Activated CD4-positive, alpha-beta T cell treated with anti-CD3 and anti-CD28 coated beads, Interleukin-2, amount 10 ng/mL, durations not matched to agents 24 days and 14 days (primary cell): ENCODE measurements at regions of chr18 and their contacts with region 1.

Region 1: DNA sequence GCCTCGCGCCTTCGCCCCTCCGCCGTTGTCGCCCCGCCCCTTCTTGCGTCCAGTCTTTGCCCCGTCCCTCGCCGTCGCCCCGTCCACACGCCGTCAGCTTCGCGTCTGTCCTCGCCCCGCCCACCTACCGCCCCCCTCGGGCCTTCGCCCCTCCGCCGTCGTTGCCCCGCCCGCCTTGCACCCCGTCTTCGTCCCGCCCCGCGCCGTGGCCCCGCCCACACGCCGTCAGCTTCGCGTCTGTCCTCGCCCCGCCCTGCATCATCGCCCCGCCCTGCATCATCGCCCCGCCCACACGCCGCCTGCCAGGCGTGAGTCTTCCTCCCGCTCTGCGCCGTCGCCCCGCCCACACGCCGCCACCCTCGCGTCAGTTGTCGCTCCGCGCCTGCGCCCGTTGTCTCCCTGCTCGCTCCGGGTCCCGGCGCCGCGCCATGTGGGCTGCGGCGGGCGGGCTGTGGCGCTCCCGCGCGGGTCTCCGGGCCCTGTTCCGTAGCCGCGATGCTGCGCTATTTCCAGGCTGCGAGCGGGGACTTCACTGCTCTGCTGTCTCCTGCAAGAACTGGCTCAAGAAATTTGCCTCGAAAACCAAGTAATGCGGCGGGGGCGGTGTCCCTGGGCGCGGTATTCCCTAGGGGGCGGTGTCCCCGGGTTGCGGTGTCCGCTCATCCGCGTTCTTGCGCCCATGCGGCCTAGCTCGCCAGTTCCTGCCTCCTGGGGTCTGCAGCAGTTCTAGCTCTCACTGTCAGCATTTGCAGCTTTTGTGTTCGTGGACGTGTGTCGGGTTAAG is at the start of gene RBFA:
- DNase-seq: peak; percentile 99
- H3K4me3 Mint-ChIP-seq: peak within 1 kb of the TSS; percentile 94
- H3K27ac Mint-ChIP-seq: peak within 1 kb of the TSS; percentile 97
- H3K4me1 Mint-ChIP-seq: peaks cover 30% of the 10 kb centered on the region
- H3K27me3 Mint-ChIP-seq: peaks cover 4% of the 10 kb centered on the region
- total RNA-seq, gene RBFA: 46.0 and 49.9 TPM in 2 replicates

Region 2: DNA sequence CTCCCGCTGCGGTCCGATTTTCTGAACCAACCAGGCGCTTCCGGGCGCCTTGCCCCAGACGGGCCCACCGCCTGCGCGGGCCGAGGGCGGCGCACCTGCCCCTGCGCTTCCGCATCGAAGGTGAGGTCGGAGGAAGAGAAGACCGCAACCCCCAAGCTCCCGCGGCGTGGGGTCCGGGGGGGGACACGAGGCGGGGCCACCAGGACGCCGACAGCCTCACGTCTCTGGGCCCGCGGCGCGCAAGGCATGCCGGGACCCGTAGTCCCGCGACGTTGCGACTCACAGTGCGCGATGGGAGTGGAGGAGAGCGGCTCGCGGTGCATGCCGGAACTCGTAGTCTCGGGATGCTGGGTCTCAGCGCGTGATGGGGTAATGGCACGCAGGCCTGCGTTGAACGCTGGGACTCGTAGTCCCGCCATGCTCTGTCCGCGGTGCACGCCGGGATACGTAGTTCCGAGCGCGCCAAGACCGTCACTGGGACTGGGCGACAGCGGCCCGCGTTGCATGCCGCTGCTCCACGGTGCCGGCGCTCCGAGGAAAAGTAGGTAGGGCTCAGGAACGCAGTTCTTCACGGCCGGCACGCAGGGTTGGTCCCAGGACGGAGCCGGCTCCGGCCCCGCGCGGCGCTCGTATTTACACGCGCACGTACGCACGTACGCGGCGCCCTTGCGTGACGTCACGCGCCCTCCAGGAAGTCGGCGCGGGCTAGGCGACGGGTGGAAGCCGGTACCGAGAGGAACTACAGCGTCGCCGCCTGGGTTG is 355.0 kb before region 1 on chr18 and contains the start of gene CTDP1:
- intact Hi-C with region 1: loop called (anchors 1 kb)
- DNase-seq: peak; percentile 99
- H3K4me3 Mint-ChIP-seq: peak within 1 kb of the TSS; percentile 93
- H3K27ac Mint-ChIP-seq: peak within 1 kb of the TSS; percentile 99
- H3K4me1 Mint-ChIP-seq: peaks cover 56% of the 10 kb centered on the region
- H3K27me3 Mint-ChIP-seq: peaks cover 4% of the 10 kb centered on the region
- total RNA-seq, gene CTDP1: 41.2 and 45.5 TPM in 2 replicates

Region 3: GRCh38 chr18:79964330-79965118 is 69.7 kb before region 1 on chr18 and contains the start of gene HSBP1L1:
- intact Hi-C with region 1: loop called (anchors 2 kb)
- DNase-seq: peak; percentile 94
- H3K4me3 Mint-ChIP-seq: peak within 1 kb of the TSS; percentile 82
- H3K27ac Mint-ChIP-seq: peak within 1 kb of the TSS; percentile 84
- H3K4me1 Mint-ChIP-seq: peaks cover 31% of the 10 kb centered on the region
- H3K27me3 Mint-ChIP-seq: peaks cover 3% of the 10 kb centered on the region
- total RNA-seq, gene HSBP1L1: 6.8 and 8.1 TPM in 2 replicates

Region 4: GRCh38 chr18:79988451-79989194 is 45.6 kb before region 1 on chr18 and contains the start of gene TXNL4A:
- intact Hi-C with region 1: loop called (anchors 1 kb)
- DNase-seq: peak; percentile 96
- H3K4me3 Mint-ChIP-seq: peak within 1 kb of the TSS; percentile 88
- H3K27ac Mint-ChIP-seq: peak within 1 kb of the TSS; percentile 94
- H3K4me1 Mint-ChIP-seq: peaks cover 32% of the 10 kb centered on the region
- H3K27me3 Mint-ChIP-seq: no peaks in the 10 kb centered on the region
- total RNA-seq, gene TXNL4A: 198 and 210 TPM in 2 replicates

Region 5: GRCh38 chr18:80108728-80109675 is 74.7 kb after region 1 on chr18 and contains the start of gene ADNP2:
- intact Hi-C with region 1: loop called (anchors 1 kb)
- DNase-seq: peak; percentile 96
- H3K4me3 Mint-ChIP-seq: peak within 1 kb of the TSS; percentile 85
- H3K27ac Mint-ChIP-seq: peak within 1 kb of the TSS; percentile 88
- H3K4me1 Mint-ChIP-seq: peaks cover 24% of the 10 kb centered on the region
- H3K27me3 Mint-ChIP-seq: no peaks in the 10 kb centered on the region
- total RNA-seq, gene ADNP2: 29.3 and 29.8 TPM in 2 replicates

Region 6: DNA sequence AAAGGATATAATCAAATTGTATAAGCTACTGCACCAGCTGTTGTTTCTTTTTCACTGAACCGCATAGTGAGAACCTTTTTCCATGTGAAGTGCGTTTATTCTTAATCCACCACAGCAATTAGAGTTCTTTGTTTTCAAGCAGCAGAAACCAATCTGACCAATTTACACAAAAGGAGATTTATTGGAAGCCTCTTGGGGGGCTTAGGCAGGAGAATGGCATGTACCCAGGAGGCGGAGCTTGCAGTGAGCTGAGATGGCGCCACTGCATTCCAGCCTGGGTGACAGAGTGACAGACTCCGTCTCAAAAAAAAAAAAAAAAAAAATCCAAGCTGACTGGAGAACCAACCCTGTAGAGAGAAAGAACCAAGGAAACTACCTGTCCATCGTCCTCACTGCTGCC is 84.9 kb after region 1 on chr18:
- intact Hi-C with region 1: no loop called
- DNase-seq: no peak
- H3K4me3 Mint-ChIP-seq: no peak overlapping the region
- H3K27ac Mint-ChIP-seq: no peak overlapping the region
- H3K4me1 Mint-ChIP-seq: peaks cover 13% of the 10 kb centered on the region
- H3K27me3 Mint-ChIP-seq: no peaks in the 10 kb centered on the region

Region 7: GRCh38 chr18:80147418-80148325 is 113.4 kb after region 1 on chr18:
- intact Hi-C with region 1: loop called (anchors 1 kb)
- DNase-seq: peak; percentile 94
- H3K4me3 Mint-ChIP-seq: peak overlapping the region; percentile 88
- H3K27ac Mint-ChIP-seq: peak overlapping the region; percentile 82
- H3K4me1 Mint-ChIP-seq: peaks cover 5% of the 10 kb centered on the region
- H3K27me3 Mint-ChIP-seq: no peaks in the 10 kb centered on the region

Region 8: DNA sequence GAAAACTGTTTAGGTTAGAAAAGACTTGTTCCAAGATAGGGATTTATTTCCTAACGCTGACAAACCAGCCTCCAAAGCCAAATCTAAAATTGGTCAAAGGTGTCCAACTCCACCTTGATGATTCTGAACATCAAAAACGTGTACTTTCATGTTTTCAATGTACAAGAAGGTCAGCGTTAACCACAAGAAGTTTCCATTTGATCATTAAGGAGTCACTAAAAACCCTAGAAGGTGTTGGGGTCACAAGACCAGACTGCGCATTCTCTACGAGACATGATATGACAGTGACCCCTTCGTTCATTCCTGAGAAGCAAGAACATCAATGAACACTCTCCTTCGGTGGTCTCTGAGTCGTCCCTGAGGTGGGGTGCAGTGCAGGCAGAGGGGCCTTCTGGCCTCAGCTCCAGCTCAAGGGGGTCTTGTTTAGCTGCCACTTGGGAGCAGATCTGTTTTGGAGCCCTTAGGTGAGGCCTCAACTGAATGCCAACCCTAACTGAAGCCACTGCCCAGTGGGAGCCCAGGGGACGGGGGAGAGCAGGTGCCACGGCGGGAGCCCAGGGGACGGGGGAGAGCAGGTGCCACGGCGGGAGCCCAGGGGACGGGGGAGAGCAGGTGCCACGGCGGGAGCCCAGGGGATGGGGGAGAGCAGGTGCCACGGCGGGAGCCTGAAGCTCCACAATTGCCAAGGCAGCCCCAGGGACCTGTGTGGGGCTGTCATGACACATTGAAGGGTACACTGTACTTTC is 157.8 kb after region 1 on chr18:
- intact Hi-C with region 1: no loop called
- DNase-seq: no peak
- H3K4me3 Mint-ChIP-seq: no peak overlapping the region
- H3K27ac Mint-ChIP-seq: no peak overlapping the region
- H3K4me1 Mint-ChIP-seq: peaks cover 4% of the 10 kb centered on the region
- H3K27me3 Mint-ChIP-seq: peaks cover 14% of the 10 kb centered on the region